HEK293 (cell line): ENCODE measurements at regions of chr1 and their contacts with region 1.

Region 1: DNA sequence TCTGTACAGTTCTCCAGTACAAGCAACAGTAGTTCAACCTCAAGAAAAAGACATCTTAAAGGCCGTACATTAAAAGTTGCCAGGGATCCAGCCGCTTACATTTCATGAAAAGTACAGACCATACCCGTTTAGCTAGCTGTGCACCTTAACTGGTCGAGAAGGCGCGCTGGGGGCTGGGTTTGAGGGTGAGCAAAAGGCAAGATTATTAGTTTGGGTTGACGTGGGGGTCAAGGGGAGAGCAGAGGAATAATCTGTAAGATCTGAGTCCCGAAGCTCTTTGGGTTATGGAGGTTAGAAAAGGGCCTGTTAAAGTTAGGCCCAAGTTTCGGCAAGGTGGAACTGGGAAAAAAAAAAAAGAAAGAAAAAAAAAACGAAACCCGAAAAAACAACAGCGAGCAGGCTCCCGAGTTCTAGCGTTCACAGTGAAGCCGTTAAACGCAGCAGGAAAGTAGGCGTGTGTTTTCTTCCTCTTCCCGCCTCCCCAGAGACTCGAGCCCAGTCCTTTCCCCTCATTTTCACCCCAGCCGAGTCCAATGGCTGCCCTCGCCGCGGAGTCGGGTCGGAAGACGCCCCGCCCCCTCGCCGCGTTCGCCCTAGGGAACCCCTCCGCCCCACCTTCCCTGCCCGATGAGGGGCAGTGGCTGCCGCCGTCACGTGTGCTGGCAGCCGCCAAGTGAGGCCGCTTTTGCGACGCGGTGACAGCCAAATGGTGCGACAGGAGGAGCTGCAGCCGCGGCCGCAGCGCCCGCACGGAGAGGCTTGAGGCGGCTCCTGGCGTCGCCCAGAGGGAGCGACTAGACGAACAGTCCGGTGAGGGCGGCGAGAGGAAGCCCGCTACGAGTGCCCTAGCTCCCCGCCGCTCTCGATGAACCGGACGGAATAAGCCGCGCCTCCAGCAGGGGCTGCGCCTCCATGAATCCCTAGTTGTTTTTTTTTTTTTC is at the start of gene PKN2:
- H3K4me3 ChIP-seq: peak within 1 kb of the TSS; percentile 90
- H3K27ac ChIP-seq: peak within 1 kb of the TSS; percentile 97
- H3K4me1 ChIP-seq: peaks cover 2% of the 10 kb centered on the region; the same call in 1 of the 2 replicates
- CTCF ChIP-seq: peak; percentile 86

Region 2: DNA sequence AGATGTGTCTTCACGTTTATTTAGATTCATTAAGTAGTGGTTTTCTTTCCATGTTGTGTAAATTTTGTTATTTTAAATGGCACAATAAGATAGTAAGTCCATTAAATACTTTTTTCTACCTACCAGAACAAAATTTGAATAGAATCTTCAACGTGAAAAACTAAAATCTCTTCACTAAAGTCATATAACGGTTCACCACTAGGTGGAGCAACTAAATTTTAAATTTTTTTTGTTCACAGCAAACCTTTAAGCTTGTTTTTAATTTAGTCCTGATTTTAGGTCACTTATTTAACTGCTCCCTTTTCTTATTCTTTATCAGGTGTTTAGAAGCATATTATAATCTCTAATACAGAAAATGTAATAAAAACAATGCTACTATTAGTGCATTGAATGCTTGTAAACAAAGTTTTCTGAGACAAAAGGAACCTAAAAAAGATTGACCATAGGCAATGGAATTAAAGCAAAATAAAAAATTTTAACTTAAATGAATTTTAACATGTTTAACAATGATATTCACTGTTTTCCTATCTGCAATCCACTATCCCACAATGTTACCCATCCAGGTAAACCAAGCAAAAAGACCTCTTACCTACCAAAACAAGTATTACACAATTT is 28.0 kb before region 1 on chr1:
- CTCF ChIA-PET with region 1: interaction called, 16 read pairs
- POLR2A ChIA-PET with region 1: no interaction called
- H3K4me3 ChIP-seq: no peak overlapping the region
- H3K27ac ChIP-seq: no peak overlapping the region
- H3K4me1 ChIP-seq: no peaks in the 10 kb centered on the region
- CTCF ChIP-seq: no peak

Region 3: DNA sequence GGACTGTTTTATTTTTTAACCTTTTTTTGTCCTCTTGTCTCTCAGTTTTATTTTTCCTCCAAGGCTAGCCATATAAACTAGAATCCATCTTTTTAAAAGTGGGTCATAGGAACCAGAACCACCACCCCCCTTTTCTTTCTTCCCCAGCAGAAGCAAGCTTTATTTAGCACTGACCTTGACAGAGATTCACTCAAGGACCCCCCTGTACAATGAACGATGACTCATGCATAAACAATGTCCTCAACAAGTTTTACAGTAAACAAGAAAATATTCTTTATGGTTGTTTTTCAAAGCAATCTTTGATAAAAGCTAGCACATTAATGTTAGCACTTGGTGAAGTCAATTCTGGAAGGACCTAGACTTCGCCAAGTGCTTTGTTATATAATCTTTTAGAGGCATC is 14.3 kb after region 1 on chr1:
- CTCF ChIA-PET with region 1: interaction called, 6 read pairs
- POLR2A ChIA-PET with region 1: interaction called, 34 read pairs
- H3K4me3 ChIP-seq: no peak overlapping the region
- H3K27ac ChIP-seq: no peak overlapping the region
- H3K4me1 ChIP-seq: peaks cover 4% of the 10 kb centered on the region; the same call in 1 of the 2 replicates
- CTCF ChIP-seq: no peak

Region 4: GRCh38 chr1:88891318-88891950 is 207.6 kb after region 1 on chr1 and contains the start of gene GTF2B:
- CTCF ChIA-PET with region 1: no interaction called
- POLR2A ChIA-PET with region 1: interaction called, 12 read pairs
- H3K4me3 ChIP-seq: peak within 1 kb of the TSS; percentile 99
- H3K27ac ChIP-seq: peak within 1 kb of the TSS; percentile 59
- H3K4me1 ChIP-seq: peaks cover 10% of the 10 kb centered on the region; the same call in 1 of the 2 replicates
- CTCF ChIP-seq: peak; percentile 40; the same call in 1 of the 2 replicates